Endothelial cell of umbilical vein (primary cell): ENCODE measurements at regions of chr17 and their contacts with region 1.

Region 1: GRCh38 chr17:13594762-13595598 is 6.7 kb downstream of the HS3ST3A1 start:
- DNase-seq: peak; percentile 58
- H3K4me3 ChIP-seq: no peak overlapping the region
- H3K27ac ChIP-seq: no peak overlapping the region
- H3K4me1 ChIP-seq: no peaks in the 10 kb centered on the region
- H3K27me3 ChIP-seq: peaks cover 3 to 6% of the 10 kb centered on the region in 2 experiments
- CTCF ChIP-seq: peak; percentile 75 to 78
- POLR2A ChIP-seq: no peak

Region 2: DNA sequence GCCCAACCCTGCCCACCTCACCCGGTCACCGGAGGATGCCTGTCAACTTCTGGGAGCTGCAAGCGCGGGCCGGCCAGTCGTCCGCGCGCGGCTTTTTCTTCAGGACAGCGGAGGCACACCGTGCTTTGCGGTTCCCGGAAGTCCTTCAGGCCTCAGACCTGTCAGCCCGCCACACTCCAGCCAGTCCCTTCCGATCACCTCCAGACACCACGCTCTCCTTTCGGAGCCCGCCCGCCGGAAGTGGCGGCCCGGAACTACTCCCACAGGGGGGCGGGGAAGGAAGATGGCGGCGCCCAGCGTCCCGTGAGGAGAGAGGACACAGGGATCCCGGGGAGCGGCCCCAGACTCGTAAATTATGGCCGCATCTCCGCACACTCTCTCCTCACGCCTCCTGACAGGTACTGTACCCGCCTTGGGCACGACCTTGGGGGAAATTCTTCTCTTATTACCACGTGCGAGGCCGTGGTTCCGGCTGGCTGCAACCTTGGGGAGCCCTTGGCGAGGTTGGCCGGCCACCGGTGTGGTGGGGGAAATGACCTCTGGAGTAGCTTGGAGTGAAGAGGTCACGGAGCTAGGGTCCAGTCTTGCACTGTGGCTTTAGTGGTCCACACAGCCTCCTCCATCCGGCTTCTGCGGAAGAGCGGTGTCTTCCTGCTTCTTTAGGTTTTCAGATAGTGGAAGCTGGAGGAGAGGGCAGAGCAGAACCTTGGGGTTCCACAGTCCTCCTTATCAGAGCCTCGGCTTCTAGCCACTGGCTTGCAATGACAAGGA is 474.5 kb after region 1 on chr17 and contains the start of gene COX10:
- CTCF ChIA-PET with region 1: no interaction called
- POLR2A ChIA-PET with region 1: no interaction called
- dilution Hi-C with region 1: no loop called
- intact Hi-C with region 1: loop called (anchors 10 kb)
- DNase-seq: peak; percentile 80
- H3K4me3 ChIP-seq: peak within 1 kb of the TSS; percentile 87 to 92 (median 89)
- H3K27ac ChIP-seq: peak within 1 kb of the TSS; percentile 91
- H3K4me1 ChIP-seq: peaks cover 4% of the 10 kb centered on the region
- H3K27me3 ChIP-seq: no peaks in the 10 kb centered on the region
- CTCF ChIP-seq: no peak
- POLR2A ChIP-seq: peak; percentile 87
- total RNA-seq, gene COX10: 12.1 and 12.5 TPM in 2 replicates

Region 3: DNA sequence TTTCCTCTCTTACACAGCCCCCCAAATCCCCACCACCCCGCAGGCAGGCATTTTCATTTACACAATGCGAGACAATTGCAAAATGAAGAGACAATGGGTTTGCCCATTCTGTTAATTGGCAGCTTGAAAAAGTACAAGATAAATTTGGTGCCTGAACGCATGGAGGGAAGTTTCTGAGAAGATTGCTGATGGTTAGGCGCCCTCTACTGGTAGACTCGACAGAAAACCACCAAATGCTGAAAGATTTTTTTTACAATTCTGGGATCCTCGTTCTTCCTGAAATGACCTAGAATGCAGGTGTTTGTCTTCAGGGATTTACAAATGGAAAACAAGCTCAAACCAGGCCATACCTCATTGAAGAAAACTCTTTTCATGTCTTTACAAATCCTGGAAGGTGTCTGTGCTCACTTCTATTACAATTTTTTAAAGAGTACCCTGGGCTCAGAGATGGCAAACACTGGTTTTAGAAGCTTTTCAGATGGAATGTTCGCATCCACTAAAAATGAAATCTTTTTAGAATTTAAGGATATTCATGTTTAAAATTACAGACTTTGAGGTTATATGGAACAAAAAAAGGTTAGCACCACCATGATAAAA is 1331.6 kb after region 1 on chr17:
- CTCF ChIA-PET with region 1: interaction called, 6 read pairs
- POLR2A ChIA-PET with region 1: no interaction called
- dilution Hi-C with region 1: no loop called
- intact Hi-C with region 1: loop called (anchors 1 kb)
- DNase-seq: peak; percentile 38
- H3K4me3 ChIP-seq: no peak overlapping the region
- H3K27ac ChIP-seq: no peak overlapping the region
- H3K4me1 ChIP-seq: no peaks in the 10 kb centered on the region
- H3K27me3 ChIP-seq: no peaks in the 10 kb centered on the region
- CTCF ChIP-seq: peak; percentile 50 to 69
- POLR2A ChIP-seq: no peak

Region 4: GRCh38 chr17:15157051-15157450 is 1562.1 kb after region 1 on chr17:
- CTCF ChIA-PET with region 1: no interaction called
- POLR2A ChIA-PET with region 1: no interaction called
- dilution Hi-C with region 1: no loop called
- intact Hi-C with region 1: loop called (anchors 5 kb)
- DNase-seq: no peak
- H3K4me3 ChIP-seq: no peak overlapping the region
- H3K27ac ChIP-seq: no peak overlapping the region
- H3K4me1 ChIP-seq: no peaks in the 10 kb centered on the region
- H3K27me3 ChIP-seq: no peaks in the 10 kb centered on the region
- CTCF ChIP-seq: no peak
- POLR2A ChIP-seq: no peak

Region 5: DNA sequence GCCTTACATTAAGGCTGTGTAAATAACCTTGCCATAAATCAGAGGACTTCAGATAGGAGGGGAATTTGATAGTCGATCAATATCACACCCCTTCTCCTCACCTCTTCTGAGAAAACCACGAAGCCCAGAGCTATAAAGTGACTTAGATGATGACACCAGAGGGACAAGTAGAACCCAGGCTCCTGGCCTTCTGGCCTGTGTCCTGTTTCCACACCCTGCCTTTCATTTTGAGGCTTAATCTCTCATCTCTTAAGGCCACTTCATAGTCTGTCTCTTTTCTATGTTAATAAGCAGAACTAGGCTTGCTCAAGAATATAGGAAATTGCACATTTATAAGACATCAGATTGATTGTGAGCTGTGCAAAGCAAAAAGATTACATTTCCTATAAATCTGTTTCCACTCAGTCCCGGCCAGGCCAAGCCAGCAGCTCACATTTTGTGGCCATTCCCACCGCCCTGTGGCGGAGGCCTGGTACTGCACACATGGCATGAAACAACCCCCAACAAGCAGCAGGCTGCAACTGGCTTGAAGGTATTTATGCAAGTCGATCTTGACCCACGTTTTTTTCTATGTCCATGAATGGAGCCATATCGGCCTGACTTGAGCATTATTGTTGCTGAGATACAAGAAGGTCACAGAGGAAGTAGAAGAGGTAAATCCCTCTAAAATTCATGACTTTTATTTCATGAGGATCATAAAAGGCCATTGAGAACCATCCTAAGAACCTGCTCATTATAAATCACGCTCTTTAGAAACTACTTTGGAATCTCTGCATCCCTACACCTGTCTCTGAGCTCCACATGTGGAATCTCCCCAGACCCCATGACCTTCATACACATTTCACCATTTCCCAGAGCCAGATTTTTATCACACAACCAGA is 1576.4 kb after region 1 on chr17:
- CTCF ChIA-PET with region 1: interaction called, 5 read pairs
- POLR2A ChIA-PET with region 1: no interaction called
- dilution Hi-C with region 1: no loop called
- intact Hi-C with region 1: loop called (anchors 2 kb)
- DNase-seq: peak; percentile 54
- H3K4me3 ChIP-seq: no peak overlapping the region
- H3K27ac ChIP-seq: no peak overlapping the region
- H3K4me1 ChIP-seq: no peaks in the 10 kb centered on the region
- H3K27me3 ChIP-seq: peaks cover 0 to 1% of the 10 kb centered on the region in 2 experiments
- CTCF ChIP-seq: peak; percentile 62 to 75
- POLR2A ChIP-seq: no peak